Left cardiac atrium (tissue), 4 donors: ENCODE measurements at regions of chr6 and their contacts with region 1.

Region 1: GRCh38 chr6:13908955-13909381 is 15.8 kb upstream of the RNF182 start:
- DNase-seq: no peak
- ATAC-seq: peak; percentile 63 to 67

Region 2: DNA sequence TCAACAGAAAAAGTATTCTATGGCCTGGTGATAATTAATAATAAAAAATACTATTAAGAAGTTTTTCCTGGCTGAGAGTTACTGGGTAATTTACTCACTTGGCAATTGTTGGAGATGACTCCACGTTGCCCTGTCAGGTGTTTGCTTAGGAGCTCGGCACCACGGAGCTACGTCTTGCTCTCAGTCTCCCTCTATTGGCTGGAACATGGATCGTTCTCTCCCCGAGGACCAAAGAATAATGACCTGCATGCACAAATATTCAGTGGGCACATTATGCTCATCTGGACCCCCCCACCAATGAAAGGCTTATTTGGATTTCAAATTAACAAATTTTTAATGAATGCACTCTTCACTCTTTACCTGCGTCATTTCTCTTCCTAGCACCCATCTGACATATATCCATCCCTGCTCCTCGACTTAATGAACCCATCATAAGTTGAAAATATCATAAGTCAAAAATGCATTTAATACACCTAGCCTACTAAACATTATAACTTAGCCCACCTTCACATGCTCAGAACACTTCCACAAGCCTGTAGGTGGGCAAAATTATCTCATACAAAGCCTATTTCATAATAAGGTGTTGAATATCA is 137.6 kb after region 1 on chr6:
- intact Hi-C with region 1: loop called in 1 of 2 experiments (anchors 1 kb)
- DNase-seq: peak; percentile 31
- ATAC-seq: peak in 1 of 2 donors; percentile 71

Region 3: GRCh38 chr6:14066782-14067406 is 157.9 kb after region 1 on chr6:
- intact Hi-C with region 1: loop called (anchors 2 to 5 kb)
- DNase-seq: no peak
- ATAC-seq: peak; percentile 79 to 85